Naive thymus-derived CD4-positive, alpha-beta T cell (primary cell): ENCODE measurements at regions of chr2 and their contacts with region 1.

Region 1: GRCh38 chr2:230614913-230615332 is 97.7 kb upstream of the CAB39 start:
- DNase-seq: peak in 2 of 9 donors; percentile 9 to 61
- ATAC-seq: peak; percentile 41
- H3K4me3 ChIP-seq: no peak overlapping the region
- H3K4me3 Mint-ChIP-seq: peak overlapping the region in 1 of 10 donors; percentile 40
- H3K27ac ChIP-seq: no peak overlapping the region
- H3K27ac Mint-ChIP-seq: peak overlapping the region in 1 of 9 donors; percentile 78
- H3K4me1 ChIP-seq: peaks cover 0 to 5% of the 10 kb centered on the region in 2 donors
- H3K4me1 Mint-ChIP-seq: peaks cover 11 to 60% (median 27%) of the 10 kb centered on the region in 7 donors
- H3K27me3 ChIP-seq: no peaks in the 10 kb centered on the region
- H3K27me3 Mint-ChIP-seq: no peaks in the 10 kb centered on the region

Region 2: DNA sequence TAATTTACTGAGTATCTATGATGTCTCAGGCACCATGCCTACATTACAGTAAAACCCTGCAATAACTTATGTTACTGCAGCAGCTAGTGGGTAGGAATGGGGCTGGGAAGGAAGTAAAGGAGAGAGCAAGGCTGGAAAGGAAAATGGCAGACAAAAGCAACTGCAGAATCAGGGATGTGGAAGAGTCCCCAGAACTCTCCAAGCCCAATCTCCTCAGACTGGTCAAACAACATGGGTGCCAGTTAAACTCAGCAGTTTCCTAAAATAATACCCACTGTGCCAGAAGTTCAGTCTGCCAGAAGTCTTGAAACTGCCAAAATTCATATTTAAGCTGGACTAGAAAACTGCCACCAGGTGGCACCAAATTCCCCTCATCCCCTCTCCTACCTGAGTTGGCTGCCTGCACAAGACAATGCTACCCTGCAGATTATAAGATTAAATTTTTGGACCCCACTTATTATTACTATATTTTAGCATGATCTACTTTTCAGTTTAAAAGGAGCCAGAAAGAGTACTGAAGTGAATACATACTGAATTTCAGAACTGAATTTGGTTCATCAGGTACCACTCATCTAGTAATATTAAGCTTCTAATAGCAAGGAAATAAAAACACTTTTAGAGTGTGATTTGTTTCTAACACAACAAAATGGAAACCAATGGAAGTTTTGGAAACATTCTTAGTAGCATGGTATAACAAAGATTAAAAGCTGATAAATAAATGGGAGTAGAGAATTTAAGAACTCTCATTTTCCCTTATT is 813.7 kb before region 1 on chr2:
- CTCF ChIA-PET with region 1: no interaction called
- POLR2A ChIA-PET with region 1: no interaction called
- intact Hi-C with region 1: loop called in 1 of 2 experiments (anchors 1 kb)
- DNase-seq: peak; percentile 33 to 76 (median 66)
- ATAC-seq: peak; percentile 70
- H3K4me3 ChIP-seq: no peak overlapping the region
- H3K4me3 Mint-ChIP-seq: no peak overlapping the region
- H3K27ac ChIP-seq: no peak overlapping the region
- H3K27ac Mint-ChIP-seq: peak overlapping the region in 6 of 9 donors; percentile 13 to 65 (median 40)
- H3K4me1 ChIP-seq: no peaks in the 10 kb centered on the region
- H3K4me1 Mint-ChIP-seq: peaks cover 0 to 6% (median 0%) of the 10 kb centered on the region in 7 donors
- H3K27me3 ChIP-seq: no peaks in the 10 kb centered on the region
- H3K27me3 Mint-ChIP-seq: no peaks in the 10 kb centered on the region

Region 3: DNA sequence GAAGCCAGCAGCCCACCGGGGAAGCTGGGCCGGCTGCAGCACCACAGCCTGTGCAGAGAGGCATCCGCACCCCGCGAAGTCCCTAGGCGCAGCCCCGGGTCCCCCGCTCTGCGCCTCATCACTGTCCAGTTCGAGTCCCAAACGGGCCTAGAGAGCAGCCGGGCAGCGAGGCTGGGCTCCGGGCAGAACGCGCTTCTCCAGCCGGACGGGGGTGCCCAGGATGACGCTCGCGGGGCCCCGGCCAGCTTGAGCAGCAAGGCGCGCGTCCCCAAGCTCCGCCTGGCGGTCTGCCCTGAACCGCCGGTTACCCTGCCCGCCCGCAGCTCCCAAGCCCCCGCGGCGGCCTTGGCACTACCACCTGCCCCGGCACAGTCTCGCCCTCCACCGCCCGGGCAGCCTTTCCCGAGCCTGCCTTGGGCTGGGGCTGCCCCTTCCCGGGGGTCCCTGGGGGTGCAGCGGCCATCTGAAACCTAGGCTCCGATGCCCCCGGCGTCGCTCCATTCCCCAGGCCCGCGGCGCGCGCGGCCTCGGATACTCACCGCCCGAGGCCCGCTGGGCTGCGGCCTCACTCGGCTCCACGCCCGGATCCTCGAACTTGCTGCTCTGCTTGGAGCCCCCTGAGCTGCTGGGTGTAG is 546.8 kb before region 1 on chr2:
- CTCF ChIA-PET with region 1: no interaction called
- POLR2A ChIA-PET with region 1: no interaction called
- intact Hi-C with region 1: loop called (anchors 1 to 5 kb)
- DNase-seq: peak; percentile 16 to 62 (median 38)
- ATAC-seq: peak; percentile 40
- H3K4me3 ChIP-seq: peak overlapping the region; percentile 62
- H3K4me3 Mint-ChIP-seq: peak overlapping the region; percentile 81 to 96 (median 90)
- H3K27ac ChIP-seq: no peak overlapping the region
- H3K27ac Mint-ChIP-seq: peak overlapping the region in 3 of 9 donors; percentile 69 to 80 (median 74)
- H3K4me1 ChIP-seq: peaks cover 0 to 7% of the 10 kb centered on the region in 2 donors
- H3K4me1 Mint-ChIP-seq: peaks cover 8 to 18% (median 12%) of the 10 kb centered on the region in 7 donors
- H3K27me3 ChIP-seq: no peaks in the 10 kb centered on the region
- H3K27me3 Mint-ChIP-seq: peaks cover 4 to 32% (median 5%) of the 10 kb centered on the region in 5 donors

Region 4: GRCh38 chr2:230170532-230170931 is 444.4 kb before region 1 on chr2:
- CTCF ChIA-PET with region 1: interaction called, 7 read pairs
- POLR2A ChIA-PET with region 1: no interaction called
- intact Hi-C with region 1: loop called (anchors 2 to 10 kb)
- DNase-seq: peak in 7 of 9 donors; percentile 4 to 47 (median 34)
- ATAC-seq: peak; percentile 53
- H3K4me3 ChIP-seq: no peak overlapping the region
- H3K4me3 Mint-ChIP-seq: peak overlapping the region in 9 of 10 donors; percentile 23 to 75 (median 61)
- H3K27ac ChIP-seq: peak overlapping the region; percentile 40
- H3K27ac Mint-ChIP-seq: peak overlapping the region; percentile 44 to 95 (median 87)
- H3K4me1 ChIP-seq: peaks cover 0 to 12% of the 10 kb centered on the region in 2 donors
- H3K4me1 Mint-ChIP-seq: peaks cover 4 to 22% (median 16%) of the 10 kb centered on the region in 7 donors
- H3K27me3 ChIP-seq: no peaks in the 10 kb centered on the region
- H3K27me3 Mint-ChIP-seq: no peaks in the 10 kb centered on the region

Region 5: GRCh38 chr2:230219419-230220331 is 395.2 kb before region 1 on chr2 and contains the start of gene SP110:
- CTCF ChIA-PET with region 1: no interaction called
- POLR2A ChIA-PET with region 1: no interaction called
- intact Hi-C with region 1: loop called (anchors 1 to 5 kb)
- DNase-seq: peak; percentile 38 to 84 (median 81)
- ATAC-seq: peak; percentile 93
- H3K4me3 ChIP-seq: peak within 1 kb of the TSS; percentile 95
- H3K4me3 Mint-ChIP-seq: peak within 1 kb of the TSS; percentile 89 to 100 (median 99)
- H3K27ac ChIP-seq: peak within 1 kb of the TSS; percentile 83
- H3K27ac Mint-ChIP-seq: peak within 1 kb of the TSS; percentile 94 to 100 (median 99)
- H3K4me1 ChIP-seq: peaks cover 22 to 36% of the 10 kb centered on the region in 2 donors
- H3K4me1 Mint-ChIP-seq: peaks cover 44 to 75% (median 67%) of the 10 kb centered on the region in 7 donors
- H3K27me3 ChIP-seq: no peaks in the 10 kb centered on the region
- H3K27me3 Mint-ChIP-seq: no peaks in the 10 kb centered on the region
- total RNA-seq, gene SP110: 97.5 to 182 (median 117) TPM

Region 6: DNA sequence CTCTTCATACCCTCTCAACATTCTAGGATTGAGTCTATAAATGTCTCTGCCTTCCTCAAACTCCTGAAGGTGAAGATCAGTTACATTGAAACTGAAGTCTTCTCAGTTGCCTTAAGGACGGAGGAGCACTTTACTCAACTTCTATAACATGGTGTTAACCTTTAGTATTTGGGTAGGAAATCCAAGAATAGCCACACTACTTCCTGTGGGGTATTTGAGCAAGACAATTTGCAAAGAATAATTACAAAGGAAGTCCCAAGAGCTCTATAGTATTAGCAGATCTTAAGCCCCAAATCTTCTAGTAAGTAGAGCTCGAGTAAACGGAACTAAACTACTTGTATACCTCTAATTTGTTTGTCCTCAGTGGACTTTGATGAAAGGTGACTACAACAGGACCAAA is 118.0 kb before region 1 on chr2:
- CTCF ChIA-PET with region 1: no interaction called
- POLR2A ChIA-PET with region 1: no interaction called
- intact Hi-C with region 1: loop called in 1 of 2 experiments (anchors 5 kb)
- DNase-seq: no peak
- ATAC-seq: no peak
- H3K4me3 ChIP-seq: no peak overlapping the region
- H3K4me3 Mint-ChIP-seq: peak overlapping the region in 7 of 10 donors; percentile 12 to 59 (median 39)
- H3K27ac ChIP-seq: no peak overlapping the region
- H3K27ac Mint-ChIP-seq: peak overlapping the region in 8 of 9 donors; percentile 13 to 75 (median 40)
- H3K4me1 ChIP-seq: peaks cover 9 to 12% of the 10 kb centered on the region in 2 donors
- H3K4me1 Mint-ChIP-seq: peaks cover 18 to 49% (median 39%) of the 10 kb centered on the region in 7 donors
- H3K27me3 ChIP-seq: no peaks in the 10 kb centered on the region
- H3K27me3 Mint-ChIP-seq: no peaks in the 10 kb centered on the region

Region 7: DNA sequence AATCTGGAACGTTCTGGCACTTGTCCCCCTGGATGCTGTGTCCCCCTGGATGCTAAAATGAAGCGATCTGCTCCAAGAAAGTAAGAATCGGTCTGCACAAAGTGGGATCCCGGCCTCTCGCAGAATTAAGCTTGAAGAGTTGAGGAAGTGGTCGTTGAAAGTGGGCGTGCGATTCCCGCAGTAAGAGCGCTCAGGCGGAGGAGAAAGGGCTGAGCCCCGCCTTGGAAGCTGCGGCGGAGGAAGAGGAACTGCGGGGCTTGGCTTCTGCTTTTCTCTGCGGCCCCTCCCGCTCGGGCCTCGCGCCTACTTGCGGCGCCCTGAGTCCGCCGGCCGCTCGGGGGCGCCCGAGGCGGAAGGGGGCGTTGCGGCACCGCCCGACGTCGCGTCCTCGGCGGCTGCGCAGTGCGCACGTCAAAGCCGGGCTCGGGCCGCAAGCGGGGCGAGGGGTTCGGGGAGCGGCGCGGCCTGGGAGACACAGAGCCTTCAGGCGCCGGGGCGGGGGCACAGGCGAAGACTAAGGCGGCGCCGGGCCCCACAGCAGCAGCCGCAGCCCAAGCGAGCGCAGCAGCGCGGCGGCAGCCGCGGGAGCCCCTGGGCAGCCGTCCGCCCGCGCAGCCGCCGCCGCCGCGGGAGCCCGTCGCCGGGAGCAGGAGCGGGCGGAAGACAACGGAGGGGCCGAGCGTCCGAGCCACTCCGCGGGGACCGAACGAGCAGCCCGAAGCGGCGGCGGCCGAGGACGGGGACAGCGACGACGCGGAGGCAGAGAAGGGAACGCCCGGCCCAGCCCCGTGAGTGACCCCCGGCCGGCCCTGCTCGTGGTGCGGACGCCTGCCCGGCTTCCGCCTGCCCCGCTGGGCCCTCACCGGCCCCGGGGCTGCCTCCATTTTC is 97.8 kb after region 1 on chr2 and contains the start of gene CAB39:
- CTCF ChIA-PET with region 1: interaction called, 3 read pairs
- POLR2A ChIA-PET with region 1: no interaction called
- intact Hi-C with region 1: loop called in 1 of 2 experiments (anchors 5 kb)
- DNase-seq: peak; percentile 82 to 94 (median 90)
- ATAC-seq: peak; percentile 96
- H3K4me3 ChIP-seq: peak within 1 kb of the TSS; percentile 92
- H3K4me3 Mint-ChIP-seq: peak within 1 kb of the TSS; percentile 91 to 99 (median 98)
- H3K27ac ChIP-seq: peak within 1 kb of the TSS; percentile 91
- H3K27ac Mint-ChIP-seq: peak within 1 kb of the TSS; percentile 92 to 98 (median 97)
- H3K4me1 ChIP-seq: peaks cover 27 to 35% of the 10 kb centered on the region in 2 donors
- H3K4me1 Mint-ChIP-seq: peaks cover 31 to 53% (median 50%) of the 10 kb centered on the region in 7 donors
- H3K27me3 ChIP-seq: no peaks in the 10 kb centered on the region
- H3K27me3 Mint-ChIP-seq: no peaks in the 10 kb centered on the region
- total RNA-seq, gene CAB39: 71.0 to 186 (median 95.4) TPM